ENCODE measurements at regions of chr6 and their contacts with region 1.

Region 1: GRCh38 chr6:107093644-107094043 is 21.7 kb downstream of the BEND3 start:
- DNase-seq: no peak
- H3K4me3 ChIP-seq: no peak overlapping the region
- H3K27ac ChIP-seq: no peak overlapping the region
- H3K4me1 ChIP-seq: no peaks in the 10 kb centered on the region
- H3K27me3 ChIP-seq: no peaks in the 10 kb centered on the region
- CTCF ChIP-seq: no peak
- EP300 ChIP-seq: no peak
- POLR2A ChIP-seq: no peak

Region 2: DNA sequence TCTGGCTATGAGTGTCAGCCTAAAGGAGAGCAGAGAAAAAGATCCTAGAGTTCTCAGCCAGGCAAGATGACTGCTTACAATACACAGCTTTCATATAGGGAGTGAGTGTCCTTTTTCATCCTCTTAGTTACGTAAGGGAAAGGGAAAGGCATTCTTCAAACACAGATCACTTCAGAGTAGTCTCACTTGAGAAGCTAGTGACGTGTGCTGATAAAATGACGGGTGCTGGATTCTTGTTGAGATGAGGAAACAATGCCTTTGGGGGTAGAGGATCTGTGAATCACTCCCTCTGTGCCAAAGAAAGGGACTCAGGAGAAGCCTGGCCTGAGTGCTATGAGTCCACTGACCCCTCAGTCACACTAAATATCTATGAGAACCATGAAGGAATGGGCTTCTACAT is 347.0 kb before region 1 on chr6:
- in situ Hi-C with region 1: no loop called
- intact Hi-C with region 1: no loop called
- DNase-seq: no peak
- H3K4me3 ChIP-seq: no peak overlapping the region
- H3K27ac ChIP-seq: peak overlapping the region; percentile 76 to 84 (median 82)
- H3K4me1 ChIP-seq: peaks cover 0 to 82% (median 23%) of the 10 kb centered on the region in 4 donors
- H3K27me3 ChIP-seq: no peaks in the 10 kb centered on the region
- CTCF ChIP-seq: no peak
- EP300 ChIP-seq: no peak
- POLR2A ChIP-seq: peak; percentile 2

Region 3: DNA sequence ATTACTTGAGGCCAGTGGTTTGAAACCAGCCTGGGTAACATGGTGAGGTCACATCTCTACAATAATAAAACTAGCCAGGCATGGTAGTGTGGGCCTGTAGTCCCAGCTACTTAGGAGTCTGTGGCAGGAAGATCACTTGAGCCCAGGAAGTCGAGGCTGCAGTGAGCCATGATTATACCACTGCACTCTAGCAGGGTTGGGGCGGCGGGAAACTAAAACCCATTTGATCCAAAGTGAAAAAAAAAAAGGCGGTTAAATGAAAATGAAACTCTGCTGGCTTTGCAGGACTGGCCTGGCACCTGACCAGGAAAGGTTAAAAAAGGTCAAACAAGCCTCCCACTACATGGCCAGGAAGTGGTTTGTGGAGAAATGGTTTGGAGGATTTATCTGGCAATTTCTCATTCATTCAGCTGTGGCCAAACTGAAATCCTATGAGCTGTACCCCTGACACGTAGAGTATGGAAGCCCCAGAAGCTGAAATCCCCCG is 29.0 kb before region 1 on chr6:
- in situ Hi-C with region 1: no loop called
- intact Hi-C with region 1: loop called (anchors 1 kb)
- DNase-seq: peak; percentile 20
- H3K4me3 ChIP-seq: no peak overlapping the region
- H3K27ac ChIP-seq: no peak overlapping the region
- H3K4me1 ChIP-seq: peaks cover 0 to 16% (median 6%) of the 10 kb centered on the region in 4 donors
- H3K27me3 ChIP-seq: no peaks in the 10 kb centered on the region
- CTCF ChIP-seq: no peak
- EP300 ChIP-seq: no peak
- POLR2A ChIP-seq: no peak

Region 4: GRCh38 chr6:107931894-107932293 is 838.2 kb after region 1 on chr6:
- in situ Hi-C with region 1: no loop called
- intact Hi-C with region 1: no loop called
- DNase-seq: no peak
- H3K4me3 ChIP-seq: no peak overlapping the region
- H3K27ac ChIP-seq: no peak overlapping the region
- H3K4me1 ChIP-seq: peaks cover 0 to 6% (median 0%) of the 10 kb centered on the region in 4 donors
- H3K27me3 ChIP-seq: no peaks in the 10 kb centered on the region
- CTCF ChIP-seq: no peak
- EP300 ChIP-seq: no peak
- POLR2A ChIP-seq: no peak